ENCODE measurements at regions of chr7 and their contacts with region 1.

Region 1: GRCh38 chr7:82017334-82017943 is 247.6 kb upstream of the HGF start:
- DNase-seq: peak in 1 of 2 experiments; percentile 17
- H3K4me3 ChIP-seq: no peak overlapping the region
- H3K4me3 Mint-ChIP-seq: no peak overlapping the region
- H3K27ac Mint-ChIP-seq: no peak overlapping the region
- H3K4me1 ChIP-seq: no peaks in the 10 kb centered on the region
- H3K4me1 Mint-ChIP-seq: no peaks in the 10 kb centered on the region
- H3K27me3 ChIP-seq: no peaks in the 10 kb centered on the region
- H3K27me3 Mint-ChIP-seq: no peaks in the 10 kb centered on the region
- CTCF ChIP-seq: peak; percentile 42 to 49

Region 2: GRCh38 chr7:81482600-81483186 is 534.7 kb before region 1 on chr7:
- CTCF ChIA-PET with region 1: no interaction called
- POLR2A ChIA-PET with region 1: no interaction called
- intact Hi-C with region 1: loop called (anchors 2 kb)
- DNase-seq: no peak
- H3K4me3 ChIP-seq: no peak overlapping the region
- H3K4me3 Mint-ChIP-seq: no peak overlapping the region
- H3K27ac Mint-ChIP-seq: no peak overlapping the region
- H3K4me1 ChIP-seq: peaks cover 8% of the 10 kb centered on the region
- H3K4me1 Mint-ChIP-seq: no peaks in the 10 kb centered on the region
- H3K27me3 ChIP-seq: no peaks in the 10 kb centered on the region
- H3K27me3 Mint-ChIP-seq: peaks cover 4% of the 10 kb centered on the region
- CTCF ChIP-seq: peak; percentile 40 to 43

Region 3: GRCh38 chr7:81527649-81528048 is 489.8 kb before region 1 on chr7:
- CTCF ChIA-PET with region 1: no interaction called
- POLR2A ChIA-PET with region 1: no interaction called
- intact Hi-C with region 1: loop called (anchors 1 kb)
- DNase-seq: peak in 1 of 2 experiments; percentile 41
- H3K4me3 ChIP-seq: no peak overlapping the region
- H3K4me3 Mint-ChIP-seq: no peak overlapping the region
- H3K27ac Mint-ChIP-seq: no peak overlapping the region
- H3K4me1 ChIP-seq: no peaks in the 10 kb centered on the region
- H3K4me1 Mint-ChIP-seq: no peaks in the 10 kb centered on the region
- H3K27me3 ChIP-seq: no peaks in the 10 kb centered on the region
- H3K27me3 Mint-ChIP-seq: peaks cover 3% of the 10 kb centered on the region
- CTCF ChIP-seq: peak in 1 of 2 experiments; percentile 30

Region 4: DNA sequence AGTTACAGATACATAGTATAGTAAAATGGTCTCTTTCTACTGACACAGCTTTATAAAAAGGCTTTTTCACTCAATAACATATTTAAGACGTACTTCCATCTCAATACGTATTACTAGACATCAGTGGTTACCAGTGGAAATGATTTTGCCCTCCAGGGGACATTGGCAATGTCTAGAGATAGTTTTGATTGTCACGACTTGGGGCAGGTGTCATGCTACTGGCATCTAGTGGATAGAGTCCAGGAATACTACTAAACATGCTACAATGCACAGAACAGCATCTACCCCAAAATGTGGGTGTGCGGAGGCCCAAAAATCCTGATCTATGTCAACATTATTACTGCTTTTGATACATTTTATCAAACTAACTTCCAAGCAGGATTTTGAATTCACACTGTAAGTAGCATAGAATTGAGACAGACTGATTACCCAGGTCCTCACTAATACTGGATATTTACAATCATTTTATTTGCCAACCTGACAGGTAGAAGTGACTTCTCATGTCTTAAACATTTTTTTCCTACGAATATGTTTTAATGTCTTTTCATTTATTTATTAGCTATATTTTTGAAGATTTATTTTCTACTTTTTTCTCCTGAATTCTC is 301.4 kb before region 1 on chr7:
- CTCF ChIA-PET with region 1: no interaction called
- POLR2A ChIA-PET with region 1: no interaction called
- intact Hi-C with region 1: loop called (anchors 1 kb)
- DNase-seq: peak; percentile 27 to 28
- H3K4me3 ChIP-seq: no peak overlapping the region
- H3K4me3 Mint-ChIP-seq: no peak overlapping the region
- H3K27ac Mint-ChIP-seq: no peak overlapping the region
- H3K4me1 ChIP-seq: no peaks in the 10 kb centered on the region
- H3K4me1 Mint-ChIP-seq: no peaks in the 10 kb centered on the region
- H3K27me3 ChIP-seq: no peaks in the 10 kb centered on the region
- H3K27me3 Mint-ChIP-seq: no peaks in the 10 kb centered on the region
- CTCF ChIP-seq: peak; percentile 38 to 40

Measured in Caco-2 (cell line).